ENCODE measurements at regions of chr2 and their contacts with region 1.

Region 1: DNA sequence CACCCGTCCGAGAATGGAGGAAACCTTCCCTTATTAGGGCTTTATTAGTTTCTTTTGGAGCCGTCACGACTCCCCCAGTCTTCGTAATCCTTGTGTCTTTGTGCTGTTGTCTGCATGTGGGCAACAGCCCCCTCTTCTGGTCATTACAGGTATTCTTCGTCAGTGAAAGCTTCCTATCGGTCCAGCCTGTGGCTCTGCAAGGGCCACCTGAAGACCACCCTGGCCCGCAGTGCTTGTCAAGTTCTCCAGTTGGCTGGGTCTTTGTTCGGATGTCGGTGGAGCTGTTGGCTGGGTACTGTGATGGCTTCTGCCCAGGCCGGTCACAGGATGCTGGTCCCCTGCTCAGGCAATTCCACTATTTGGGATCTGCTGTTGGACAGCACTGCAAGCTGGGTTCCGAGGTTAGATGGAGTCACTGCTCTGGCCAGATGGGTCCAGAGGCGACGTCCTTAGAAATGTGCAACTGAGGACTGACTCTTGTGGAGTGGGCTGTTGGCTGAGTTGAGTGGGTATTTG is 19.2 kb downstream of the E2F6 start:
- DNase-seq: peak; percentile 10 to 72 (median 50)
- ATAC-seq: peak; percentile 73
- H3K4me3 ChIP-seq: no peak overlapping the region
- H3K4me3 Mint-ChIP-seq: no peak overlapping the region
- H3K27ac ChIP-seq: no peak overlapping the region
- H3K27ac Mint-ChIP-seq: no peak overlapping the region
- H3K4me1 ChIP-seq: no peaks in the 10 kb centered on the region
- H3K4me1 Mint-ChIP-seq: no peaks in the 10 kb centered on the region
- H3K27me3 ChIP-seq: no peaks in the 10 kb centered on the region
- H3K27me3 Mint-ChIP-seq: no peaks in the 10 kb centered on the region
- CTCF ChIP-seq: peak; percentile 75

Region 2: GRCh38 chr2:11234309-11234708 is 212.5 kb before region 1 on chr2:
- CTCF ChIA-PET with region 1: interaction called, 3 read pairs
- POLR2A ChIA-PET with region 1: no interaction called
- intact Hi-C with region 1: loop called (anchors 1 kb)
- DNase-seq: peak in 1 of 9 experiments; percentile 5
- ATAC-seq: no peak
- H3K4me3 ChIP-seq: no peak overlapping the region
- H3K4me3 Mint-ChIP-seq: no peak overlapping the region
- H3K27ac ChIP-seq: no peak overlapping the region
- H3K27ac Mint-ChIP-seq: no peak overlapping the region
- H3K4me1 ChIP-seq: no peaks in the 10 kb centered on the region
- H3K4me1 Mint-ChIP-seq: peaks cover 3% of the 10 kb centered on the region
- H3K27me3 ChIP-seq: no peaks in the 10 kb centered on the region
- H3K27me3 Mint-ChIP-seq: no peaks in the 10 kb centered on the region
- CTCF ChIP-seq: no peak

Region 3: GRCh38 chr2:11457935-11458334 is 11.1 kb after region 1 on chr2:
- CTCF ChIA-PET with region 1: interaction called, 16 read pairs
- POLR2A ChIA-PET with region 1: interaction called, 5 read pairs
- intact Hi-C with region 1: no loop called
- DNase-seq: no peak
- ATAC-seq: no peak
- H3K4me3 ChIP-seq: no peak overlapping the region
- H3K4me3 Mint-ChIP-seq: no peak overlapping the region
- H3K27ac ChIP-seq: no peak overlapping the region
- H3K27ac Mint-ChIP-seq: no peak overlapping the region
- H3K4me1 ChIP-seq: peaks cover 12% of the 10 kb centered on the region
- H3K4me1 Mint-ChIP-seq: peaks cover 47% of the 10 kb centered on the region
- H3K27me3 ChIP-seq: no peaks in the 10 kb centered on the region
- H3K27me3 Mint-ChIP-seq: no peaks in the 10 kb centered on the region
- CTCF ChIP-seq: no peak

Measured in CD8-positive, alpha-beta T cell (primary cell).